CD4-positive, alpha-beta T cell (primary cell): ENCODE measurements at regions of chr19 and their contacts with region 1.

Region 1: DNA sequence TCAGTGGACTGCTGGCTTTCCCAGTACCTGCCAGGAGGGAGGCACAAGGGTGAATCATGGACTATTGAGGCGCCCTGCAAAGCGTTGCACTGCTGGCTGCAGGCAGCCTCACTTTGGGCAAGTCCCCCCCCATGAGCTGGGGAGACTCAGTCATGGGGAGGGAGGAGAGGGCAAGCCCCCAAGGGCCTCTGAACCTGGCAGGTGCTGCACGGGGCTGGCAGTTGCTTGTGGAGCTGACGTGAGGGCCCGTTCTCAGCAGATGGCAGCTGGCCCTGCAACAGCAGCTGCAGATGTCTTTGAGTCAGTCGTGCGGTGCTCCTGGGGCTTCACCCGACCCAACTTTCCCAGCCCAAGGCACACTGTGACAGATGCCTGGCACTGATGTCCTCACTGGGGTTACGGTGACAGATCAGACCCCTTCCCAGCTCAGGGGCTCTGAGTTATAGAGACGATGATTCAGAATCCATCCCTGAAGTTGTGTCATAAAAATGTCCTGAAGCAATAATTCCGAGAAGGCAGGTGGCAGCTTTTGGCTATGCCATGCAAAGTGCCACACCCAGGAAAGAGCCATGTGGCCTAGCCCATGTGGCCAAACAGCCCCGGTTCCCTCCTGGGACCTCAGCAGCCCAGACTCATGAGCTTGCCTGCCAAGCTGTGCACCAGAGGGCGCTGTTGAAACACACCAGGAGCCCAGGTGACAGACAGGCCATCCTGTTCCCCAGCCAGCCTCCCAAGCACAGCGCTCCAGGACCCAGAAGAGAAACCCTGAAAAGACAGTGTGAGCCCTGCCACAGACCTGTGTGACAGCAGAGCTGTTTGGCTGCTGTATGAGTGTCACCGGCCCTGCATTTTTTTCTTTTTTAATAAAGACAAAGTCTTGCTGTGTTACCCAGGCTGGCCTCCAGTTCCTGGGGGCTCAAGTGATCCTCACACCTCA is 53.6 kb upstream of the LDLR start:
- DNase-seq: peak; percentile 78 to 95 (median 85)
- ATAC-seq: peak; percentile 97
- H3K4me3 ChIP-seq: no peak overlapping the region
- H3K4me3 Mint-ChIP-seq: no peak overlapping the region
- H3K27ac ChIP-seq: no peak overlapping the region
- H3K27ac Mint-ChIP-seq: no peak overlapping the region
- H3K4me1 ChIP-seq: peaks cover 10% of the 10 kb centered on the region
- H3K4me1 Mint-ChIP-seq: peaks cover 9% of the 10 kb centered on the region
- H3K27me3 ChIP-seq: no peaks in the 10 kb centered on the region
- H3K27me3 Mint-ChIP-seq: no peaks in the 10 kb centered on the region
- CTCF ChIP-seq: peak; percentile 87

Region 2: GRCh38 chr19:11064831-11065303 is 29.2 kb after region 1 on chr19:
- CTCF ChIA-PET with region 1: no interaction called
- POLR2A ChIA-PET with region 1: no interaction called
- intact Hi-C with region 1: no loop called
- DNase-seq: no peak
- ATAC-seq: no peak
- H3K4me3 ChIP-seq: no peak overlapping the region
- H3K4me3 Mint-ChIP-seq: no peak overlapping the region
- H3K27ac ChIP-seq: no peak overlapping the region
- H3K27ac Mint-ChIP-seq: no peak overlapping the region
- H3K4me1 ChIP-seq: peaks cover 4% of the 10 kb centered on the region
- H3K4me1 Mint-ChIP-seq: no peaks in the 10 kb centered on the region
- H3K27me3 ChIP-seq: no peaks in the 10 kb centered on the region
- H3K27me3 Mint-ChIP-seq: no peaks in the 10 kb centered on the region
- CTCF ChIP-seq: no peak

Region 3: DNA sequence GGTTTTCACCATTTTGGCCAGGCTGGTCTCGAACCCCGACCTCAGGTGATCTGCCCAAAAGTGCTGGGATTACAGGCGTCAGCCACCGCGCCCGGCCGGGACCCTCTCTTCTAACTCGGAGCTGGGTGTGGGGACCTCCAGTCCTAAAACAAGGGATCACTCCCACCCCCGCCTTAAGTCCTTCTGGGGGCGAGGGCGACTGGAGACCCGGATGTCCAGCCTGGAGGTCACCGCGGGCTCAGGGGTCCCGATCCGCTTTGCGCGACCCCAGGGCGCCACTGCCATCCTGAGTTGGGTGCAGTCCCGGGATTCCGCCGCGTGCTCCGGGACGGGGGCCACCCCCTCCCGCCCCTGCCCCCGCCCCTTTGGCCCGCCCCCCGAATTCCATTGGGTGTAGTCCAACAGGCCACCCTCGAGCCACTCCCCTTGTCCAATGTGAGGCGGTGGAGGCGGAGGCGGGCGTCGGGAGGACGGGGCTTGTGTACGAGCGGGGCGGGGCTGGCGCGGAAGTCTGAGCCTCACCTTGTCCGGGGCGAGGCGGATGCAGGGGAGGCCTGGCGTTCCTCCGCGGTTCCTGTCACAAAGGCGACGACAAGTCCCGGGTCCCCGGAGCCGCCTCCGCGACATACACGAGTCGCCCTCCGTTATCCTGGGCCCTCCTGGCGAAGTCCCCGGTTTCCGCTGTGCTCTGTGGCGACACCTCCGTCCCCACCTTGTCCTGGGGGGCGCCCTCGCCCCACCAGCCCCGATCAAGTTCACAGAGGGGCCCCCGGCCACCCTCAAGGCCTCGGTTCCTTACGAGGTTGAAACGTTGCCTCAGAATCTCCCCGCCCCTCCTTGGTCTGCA is 54.6 kb after region 1 on chr19:
- CTCF ChIA-PET with region 1: interaction called, 15 read pairs
- POLR2A ChIA-PET with region 1: interaction called, 9 read pairs
- intact Hi-C with region 1: loop called in 1 of 2 experiments (anchors 5 kb)
- DNase-seq: peak; percentile 94 to 99 (median 97)
- ATAC-seq: peak; percentile 86
- H3K4me3 ChIP-seq: peak overlapping the region; percentile 86
- H3K4me3 Mint-ChIP-seq: peak overlapping the region; percentile 89
- H3K27ac ChIP-seq: peak overlapping the region; percentile 98 to 99
- H3K27ac Mint-ChIP-seq: peak overlapping the region; percentile 92
- H3K4me1 ChIP-seq: peaks cover 73% of the 10 kb centered on the region
- H3K4me1 Mint-ChIP-seq: peaks cover 49% of the 10 kb centered on the region
- H3K27me3 ChIP-seq: no peaks in the 10 kb centered on the region
- H3K27me3 Mint-ChIP-seq: no peaks in the 10 kb centered on the region
- CTCF ChIP-seq: no peak

Region 4: GRCh38 chr19:11096210-11096841 is 60.6 kb after region 1 on chr19:
- CTCF ChIA-PET with region 1: interaction called, 15 read pairs
- POLR2A ChIA-PET with region 1: interaction called, 5 read pairs
- intact Hi-C with region 1: no loop called
- DNase-seq: peak in 6 of 14 experiments; percentile 5 to 71 (median 50)
- ATAC-seq: peak; percentile 13
- H3K4me3 ChIP-seq: peak overlapping the region; percentile 3
- H3K4me3 Mint-ChIP-seq: peak overlapping the region; percentile 18
- H3K27ac ChIP-seq: peak overlapping the region; percentile 79 to 89
- H3K27ac Mint-ChIP-seq: peak overlapping the region; percentile 84
- H3K4me1 ChIP-seq: peaks cover 63% of the 10 kb centered on the region
- H3K4me1 Mint-ChIP-seq: peaks cover 34% of the 10 kb centered on the region
- H3K27me3 ChIP-seq: no peaks in the 10 kb centered on the region
- H3K27me3 Mint-ChIP-seq: no peaks in the 10 kb centered on the region
- CTCF ChIP-seq: no peak

Region 5: DNA sequence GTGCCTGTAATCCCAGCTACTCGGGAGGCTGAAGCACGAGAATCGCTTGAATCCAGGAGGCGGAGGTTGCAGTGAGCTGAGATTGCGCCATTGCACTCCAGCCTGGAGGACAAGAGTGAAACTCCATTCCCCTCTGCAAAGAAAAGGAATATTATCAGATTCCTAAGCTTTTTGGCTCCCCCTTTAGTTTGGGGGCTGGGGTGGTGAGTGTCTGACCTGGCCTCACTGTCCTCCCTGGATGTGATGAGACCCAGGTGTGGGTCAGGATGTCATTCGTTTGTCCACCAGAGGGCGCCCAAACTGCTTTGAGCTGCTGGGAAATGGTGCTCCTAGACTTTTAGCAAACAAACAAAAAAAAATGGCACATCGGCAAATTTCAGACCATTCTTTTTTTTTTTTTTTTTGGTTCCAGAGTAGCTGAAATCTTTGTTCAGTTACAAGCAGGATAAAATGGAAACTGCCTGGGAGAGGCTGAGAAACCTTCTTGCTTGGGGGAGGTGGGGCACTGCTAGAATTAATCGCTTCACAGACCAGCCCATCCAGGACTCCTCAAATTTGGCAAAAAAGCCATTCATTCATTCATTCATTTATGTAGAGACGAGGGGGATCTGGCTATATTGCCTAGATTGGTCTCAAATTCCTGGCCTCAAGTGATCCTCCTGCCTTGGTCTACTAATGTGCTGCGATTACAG is 90.4 kb after region 1 on chr19:
- CTCF ChIA-PET with region 1: interaction called, 38 read pairs
- POLR2A ChIA-PET with region 1: no interaction called
- intact Hi-C with region 1: loop called (anchors 1 kb)
- DNase-seq: peak; percentile 65 to 88 (median 74)
- ATAC-seq: peak; percentile 64
- H3K4me3 ChIP-seq: no peak overlapping the region
- H3K4me3 Mint-ChIP-seq: no peak overlapping the region
- H3K27ac ChIP-seq: no peak overlapping the region
- H3K27ac Mint-ChIP-seq: no peak overlapping the region
- H3K4me1 ChIP-seq: peaks cover 12% of the 10 kb centered on the region
- H3K4me1 Mint-ChIP-seq: no peaks in the 10 kb centered on the region
- H3K27me3 ChIP-seq: no peaks in the 10 kb centered on the region
- H3K27me3 Mint-ChIP-seq: no peaks in the 10 kb centered on the region
- CTCF ChIP-seq: peak; percentile 82

Region 6: GRCh38 chr19:11203194-11204075 is 167.7 kb after region 1 on chr19:
- CTCF ChIA-PET with region 1: no interaction called
- POLR2A ChIA-PET with region 1: no interaction called
- intact Hi-C with region 1: loop called in 1 of 2 experiments (anchors 1 kb)
- DNase-seq: peak in 13 of 14 experiments; percentile 11 to 64 (median 26)
- ATAC-seq: no peak
- H3K4me3 ChIP-seq: no peak overlapping the region
- H3K4me3 Mint-ChIP-seq: no peak overlapping the region
- H3K27ac ChIP-seq: no peak overlapping the region
- H3K27ac Mint-ChIP-seq: no peak overlapping the region
- H3K4me1 ChIP-seq: no peaks in the 10 kb centered on the region
- H3K4me1 Mint-ChIP-seq: no peaks in the 10 kb centered on the region
- H3K27me3 ChIP-seq: peaks cover 0 to 2% of the 10 kb centered on the region in 2 experiments
- H3K27me3 Mint-ChIP-seq: peaks cover 26% of the 10 kb centered on the region
- CTCF ChIP-seq: peak; percentile 66

Region 7: DNA sequence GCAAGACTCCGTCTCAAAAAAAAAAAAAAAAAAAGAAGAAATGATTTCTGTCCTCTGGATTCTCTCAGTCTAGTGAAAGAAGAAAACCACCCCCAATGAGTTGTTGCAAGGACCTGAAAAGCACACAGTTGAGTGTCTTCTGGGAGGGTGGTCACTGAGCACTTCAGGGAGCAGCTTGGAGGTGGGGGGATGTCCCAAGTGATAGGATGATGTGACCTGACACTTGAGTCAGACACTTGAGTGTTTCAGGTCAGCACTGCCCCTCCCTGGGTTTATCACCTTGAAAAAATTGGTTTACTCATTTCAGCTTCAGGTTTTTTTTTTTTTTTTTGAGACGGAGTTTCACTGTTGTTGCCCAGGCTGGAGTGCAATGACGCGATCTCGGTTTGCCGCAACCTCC is 639.9 kb after region 1 on chr19:
- CTCF ChIA-PET with region 1: no interaction called
- POLR2A ChIA-PET with region 1: no interaction called
- intact Hi-C with region 1: no loop called
- DNase-seq: no peak
- ATAC-seq: no peak
- H3K4me3 ChIP-seq: no peak overlapping the region
- H3K4me3 Mint-ChIP-seq: no peak overlapping the region
- H3K27ac ChIP-seq: no peak overlapping the region
- H3K27ac Mint-ChIP-seq: no peak overlapping the region
- H3K4me1 ChIP-seq: peaks cover 9% of the 10 kb centered on the region
- H3K4me1 Mint-ChIP-seq: no peaks in the 10 kb centered on the region
- H3K27me3 ChIP-seq: peaks cover 11 to 22% of the 10 kb centered on the region in 2 experiments
- H3K27me3 Mint-ChIP-seq: peaks cover 36% of the 10 kb centered on the region
- CTCF ChIP-seq: no peak